ENCODE measurements at regions of chr5 and their contacts with region 1.

Region 1: GRCh38 chr5:151164686-151165392 is 7.3 kb upstream of the ANXA6 start:
- DNase-seq: peak; percentile 77 to 82
- ATAC-seq: peak; percentile 96 to 99
- H3K4me3 ChIP-seq: no peak overlapping the region
- H3K27ac ChIP-seq: no peak overlapping the region
- H3K4me1 ChIP-seq: no peaks in the 10 kb centered on the region
- CTCF ChIP-seq: peak; percentile 93
- EP300 ChIP-seq: no peak
- POLR2A ChIP-seq: no peak
- RAD21 ChIP-seq: peak; percentile 93 to 97

Region 2: DNA sequence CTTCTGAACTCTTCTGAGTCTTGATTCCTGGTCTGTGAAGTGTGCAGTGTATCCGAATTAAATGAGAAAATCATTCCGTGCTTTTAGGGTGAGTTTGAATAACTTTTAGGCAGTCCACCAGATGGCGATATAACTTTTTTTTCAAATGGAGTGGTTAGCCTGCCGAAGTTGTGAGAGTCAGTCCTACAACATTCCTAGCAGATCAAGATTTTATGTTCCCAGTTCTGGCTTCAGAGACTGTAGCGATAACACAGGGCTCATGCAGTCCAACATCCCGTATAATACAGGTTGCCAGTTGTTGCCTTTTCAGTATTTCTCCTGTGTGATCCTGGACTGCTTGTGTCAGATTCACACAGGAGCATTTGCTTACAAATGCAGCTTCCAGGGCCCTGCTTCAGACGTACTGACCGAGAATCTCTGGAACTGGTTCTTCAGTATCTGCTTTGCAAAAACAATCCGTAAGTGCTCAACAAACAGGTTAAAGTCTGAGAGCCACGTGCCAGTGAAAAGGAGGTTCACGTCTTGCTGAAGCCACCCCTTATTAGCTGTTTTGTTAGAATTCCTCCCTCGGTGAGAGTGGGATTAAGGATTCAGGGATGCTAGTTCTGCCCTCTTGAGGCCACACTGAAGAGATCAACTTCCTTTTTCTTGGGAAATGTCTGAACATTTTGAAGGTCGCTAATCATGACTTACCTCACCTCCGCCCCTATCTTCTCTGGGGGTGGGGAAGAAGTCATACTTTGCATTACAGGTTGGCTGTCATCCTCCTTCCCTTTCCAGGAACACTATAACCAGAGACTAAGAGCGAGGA is 363.5 kb before region 1 on chr5:
- CTCF ChIA-PET with region 1: interaction called, 23 read pairs
- POLR2A ChIA-PET with region 1: no interaction called
- DNase-seq: peak; percentile 59 to 71
- ATAC-seq: peak; percentile 89 to 97
- H3K4me3 ChIP-seq: peak overlapping the region; percentile 29
- H3K27ac ChIP-seq: peak overlapping the region; percentile 12 to 50; a peak in 2 of 6 replicates
- H3K4me1 ChIP-seq: no peaks in the 10 kb centered on the region
- CTCF ChIP-seq: peak; percentile 67
- EP300 ChIP-seq: no peak
- POLR2A ChIP-seq: no peak
- RAD21 ChIP-seq: peak; percentile 58 to 63; a peak in 4 of 5 replicates

Region 3: GRCh38 chr5:150918613-150919012 is 246.2 kb before region 1 on chr5:
- CTCF ChIA-PET with region 1: no interaction called
- POLR2A ChIA-PET with region 1: no interaction called
- DNase-seq: no peak
- ATAC-seq: no peak
- H3K4me3 ChIP-seq: no peak overlapping the region
- H3K27ac ChIP-seq: no peak overlapping the region
- H3K4me1 ChIP-seq: no peaks in the 10 kb centered on the region
- CTCF ChIP-seq: no peak
- EP300 ChIP-seq: no peak
- POLR2A ChIP-seq: no peak
- RAD21 ChIP-seq: no peak

Region 4: DNA sequence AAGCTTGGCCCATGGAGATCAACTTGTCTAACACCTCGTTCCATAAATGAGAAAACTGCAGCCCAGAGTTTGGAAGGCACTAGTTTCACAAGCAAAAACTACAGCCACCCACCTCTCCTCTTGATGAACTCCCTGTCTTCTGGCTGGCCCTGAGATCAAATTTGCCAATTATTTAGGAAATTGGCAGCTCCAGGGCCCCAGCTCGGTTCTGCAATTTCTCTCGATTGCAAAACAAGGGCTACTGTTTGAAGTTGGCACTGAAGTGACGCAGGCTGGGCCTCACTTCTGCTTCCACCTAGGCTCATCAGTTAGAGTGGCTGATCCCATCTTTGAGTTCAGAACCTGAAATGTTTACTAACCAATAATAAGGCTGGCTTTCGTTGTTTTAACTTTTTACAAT is 148.1 kb before region 1 on chr5:
- CTCF ChIA-PET with region 1: interaction called, 12 read pairs
- POLR2A ChIA-PET with region 1: no interaction called
- DNase-seq: no peak
- ATAC-seq: no peak
- H3K4me3 ChIP-seq: no peak overlapping the region
- H3K27ac ChIP-seq: no peak overlapping the region
- H3K4me1 ChIP-seq: no peaks in the 10 kb centered on the region
- CTCF ChIP-seq: no peak
- EP300 ChIP-seq: no peak
- POLR2A ChIP-seq: no peak
- RAD21 ChIP-seq: no peak

Region 5: DNA sequence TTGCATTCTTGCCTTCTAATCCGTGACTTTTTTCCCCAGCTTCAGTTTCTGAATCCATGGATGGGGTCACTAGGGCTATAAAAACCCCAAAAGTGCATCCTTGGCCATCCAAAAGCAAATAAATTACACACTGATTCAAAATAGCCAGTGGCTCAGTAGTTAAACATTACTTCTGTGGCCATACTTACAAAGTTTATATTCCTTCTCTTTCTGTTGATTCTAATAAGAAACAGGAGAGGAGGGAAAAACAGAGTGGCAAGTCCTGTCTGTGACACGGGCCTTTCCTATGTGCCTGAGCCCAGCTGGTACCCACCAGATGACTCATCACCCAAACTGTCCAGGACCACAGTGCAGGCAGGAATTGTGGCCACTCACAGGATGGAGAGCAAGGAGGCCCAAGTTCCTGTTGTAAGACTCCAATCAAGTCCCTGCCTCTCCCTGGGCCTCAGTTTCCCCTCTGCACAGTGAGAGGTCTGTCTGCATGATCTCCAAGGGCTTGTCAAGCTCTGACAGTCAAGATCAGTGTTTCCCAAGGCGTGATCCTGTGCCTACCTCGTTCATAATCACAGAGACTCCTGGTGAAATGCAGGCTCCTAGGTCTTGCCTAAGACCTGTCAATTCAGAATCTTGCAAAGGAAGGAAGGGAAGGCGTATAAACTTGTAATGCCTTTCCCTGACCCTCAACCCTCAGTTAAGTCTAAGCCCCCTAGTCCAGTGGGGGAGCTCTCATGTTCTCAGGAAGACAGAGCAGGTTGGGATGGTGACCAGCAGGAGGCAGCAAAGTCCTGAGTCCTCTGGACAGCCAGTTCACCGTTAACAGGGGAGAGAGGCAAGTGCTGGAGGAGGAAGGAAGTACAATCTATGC is 113.5 kb before region 1 on chr5:
- CTCF ChIA-PET with region 1: interaction called, 82 read pairs
- POLR2A ChIA-PET with region 1: no interaction called
- DNase-seq: peak; percentile 83 to 85
- ATAC-seq: peak; percentile 79 to 92
- H3K4me3 ChIP-seq: no peak overlapping the region
- H3K27ac ChIP-seq: peak overlapping the region; percentile 29 to 33; a peak in 3 of 6 replicates
- H3K4me1 ChIP-seq: peaks cover 12% of the 10 kb centered on the region
- CTCF ChIP-seq: peak; percentile 92
- EP300 ChIP-seq: no peak
- POLR2A ChIP-seq: no peak
- RAD21 ChIP-seq: peak; percentile 93 to 97

Region 6: GRCh38 chr5:151126199-151126645 is 38.6 kb before region 1 on chr5:
- CTCF ChIA-PET with region 1: interaction called, 279 read pairs
- POLR2A ChIA-PET with region 1: interaction called, 3 read pairs
- DNase-seq: peak; percentile 72 to 74
- ATAC-seq: peak; percentile 84 to 93; a peak in 5 of 6 replicates
- H3K4me3 ChIP-seq: no peak overlapping the region
- H3K27ac ChIP-seq: no peak overlapping the region
- H3K4me1 ChIP-seq: peaks cover 7% of the 10 kb centered on the region; the same call in 2 of the 3 replicates
- CTCF ChIP-seq: peak; percentile 85
- EP300 ChIP-seq: no peak
- POLR2A ChIP-seq: no peak
- RAD21 ChIP-seq: peak; percentile 74 to 78

Region 7: DNA sequence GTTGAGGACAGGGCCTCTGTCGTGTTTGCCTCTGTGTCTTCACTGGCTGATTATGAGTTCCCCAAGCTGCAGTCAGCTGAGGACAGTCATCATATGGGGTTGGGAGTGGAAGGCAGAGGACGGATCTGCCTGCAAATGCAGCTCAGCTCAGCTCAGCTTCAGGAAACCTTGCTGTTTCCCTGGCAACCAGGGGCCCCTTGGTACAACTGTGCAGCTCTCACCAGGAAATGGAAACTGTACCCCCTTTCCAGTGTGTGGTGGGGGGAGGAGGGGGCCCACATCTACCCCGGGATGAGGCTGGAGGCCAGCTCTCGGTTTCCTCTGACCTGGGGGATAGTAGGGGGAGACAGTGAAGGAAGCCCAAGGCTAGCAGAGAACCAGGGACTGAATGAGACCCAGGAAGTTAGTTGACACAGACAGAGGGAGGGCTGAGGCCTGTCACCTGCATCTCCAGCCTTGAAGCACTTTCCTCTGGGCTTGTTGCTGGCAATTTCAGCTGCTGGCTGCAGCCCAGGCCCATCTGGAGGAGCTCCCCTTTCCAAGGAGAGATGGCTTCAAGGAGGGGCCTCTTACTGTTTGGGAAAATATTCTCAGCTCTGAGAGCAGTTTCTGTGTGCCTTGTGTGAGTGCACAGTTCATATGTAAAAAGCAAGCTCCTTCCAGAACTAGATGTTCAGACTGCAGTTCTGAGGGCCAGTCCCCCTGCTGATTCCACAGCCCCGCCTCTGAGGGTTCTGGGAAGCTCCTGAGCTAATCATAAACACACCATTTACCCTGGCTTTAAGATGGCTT is 14.2 kb before region 1 on chr5:
- CTCF ChIA-PET with region 1: interaction called, 28 read pairs
- POLR2A ChIA-PET with region 1: no interaction called
- DNase-seq: no peak
- ATAC-seq: peak in 1 of 2 experiments; percentile 42; a peak in 3 of 6 replicates
- H3K4me3 ChIP-seq: no peak overlapping the region
- H3K27ac ChIP-seq: peak overlapping the region in 1 of 2 experiments; percentile 16; a peak in 3 of 6 replicates
- H3K4me1 ChIP-seq: no peaks in the 10 kb centered on the region
- CTCF ChIP-seq: no peak
- EP300 ChIP-seq: no peak
- POLR2A ChIP-seq: no peak
- RAD21 ChIP-seq: no peak

Region 8: DNA sequence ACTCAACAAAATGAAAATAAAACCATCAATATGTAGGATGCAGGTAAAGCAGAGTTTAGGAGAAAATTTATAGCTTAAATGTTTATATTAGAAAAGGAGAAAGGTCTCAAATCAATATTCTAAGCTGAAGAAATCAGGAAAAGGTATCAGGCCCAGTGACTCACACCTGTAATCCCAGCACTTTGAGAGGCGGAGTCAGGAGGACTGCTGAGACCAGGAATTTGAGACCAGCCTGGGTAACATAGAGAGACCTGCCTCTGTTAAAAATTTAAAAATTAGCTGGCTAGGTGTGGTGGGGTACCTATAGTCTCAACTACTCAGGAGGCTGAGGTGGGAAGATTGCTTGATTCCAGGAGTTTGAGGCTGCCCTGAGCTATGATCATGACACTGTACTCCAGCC is 26.8 kb after region 1 on chr5:
- CTCF ChIA-PET with region 1: interaction called, 13 read pairs
- POLR2A ChIA-PET with region 1: no interaction called
- DNase-seq: no peak
- ATAC-seq: no peak
- H3K4me3 ChIP-seq: no peak overlapping the region
- H3K27ac ChIP-seq: no peak overlapping the region
- H3K4me1 ChIP-seq: no peaks in the 10 kb centered on the region
- CTCF ChIP-seq: no peak
- EP300 ChIP-seq: no peak
- POLR2A ChIP-seq: no peak
- RAD21 ChIP-seq: no peak

Measured in A549 (cell line).